ENCODE measurements at regions of chr5 and their contacts with region 1.

Region 1: GRCh38 chr5:132490486-132491367 is at the start of gene IRF1:
- DNase-seq: peak; percentile 94 to 99 (median 97)
- ATAC-seq: peak; percentile 74
- H3K4me3 ChIP-seq: peak within 1 kb of the TSS; percentile 90 to 96
- H3K4me3 Mint-ChIP-seq: peak within 1 kb of the TSS; percentile 96
- H3K27ac ChIP-seq: peak within 1 kb of the TSS; percentile 95 to 98
- H3K27ac Mint-ChIP-seq: peak within 1 kb of the TSS; percentile 97
- H3K4me1 ChIP-seq: peaks cover 75% of the 10 kb centered on the region
- H3K4me1 Mint-ChIP-seq: peaks cover 75% of the 10 kb centered on the region
- H3K27me3 ChIP-seq: no peaks in the 10 kb centered on the region
- H3K27me3 Mint-ChIP-seq: no peaks in the 10 kb centered on the region
- CTCF ChIP-seq: no peak
- total RNA-seq, gene IRF1: 1,214 to 1,250 TPM

Region 2: DNA sequence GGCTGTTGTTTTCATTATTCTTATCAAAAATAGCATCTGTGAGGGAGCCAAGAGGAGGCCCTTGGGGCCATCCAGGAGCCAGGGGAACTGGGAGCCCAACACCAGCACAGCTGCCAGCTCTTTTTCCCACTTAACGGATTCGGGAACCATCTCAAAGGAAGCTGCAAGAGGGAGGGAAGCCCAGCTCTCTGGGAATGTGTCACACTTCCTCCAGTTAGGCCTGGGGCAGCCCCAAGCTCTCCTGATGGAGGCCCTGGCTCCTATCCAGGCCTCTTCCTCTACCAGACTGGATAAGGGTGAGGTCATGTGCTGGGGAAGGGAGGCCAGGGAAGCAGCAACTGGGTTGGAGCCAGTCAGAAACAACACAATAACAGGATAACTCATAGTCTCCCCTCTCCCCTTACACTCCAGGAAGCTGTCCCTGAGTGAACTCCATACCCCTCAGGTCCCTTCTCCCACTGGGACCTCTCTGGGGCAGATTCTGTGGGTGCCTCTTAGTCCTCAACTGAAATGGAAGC is 404.4 kb before region 1 on chr5:
- CTCF ChIA-PET with region 1: no interaction called
- POLR2A ChIA-PET with region 1: no interaction called
- intact Hi-C with region 1: no loop called
- DNase-seq: no peak
- ATAC-seq: no peak
- H3K4me3 ChIP-seq: no peak overlapping the region
- H3K4me3 Mint-ChIP-seq: no peak overlapping the region
- H3K27ac ChIP-seq: no peak overlapping the region
- H3K27ac Mint-ChIP-seq: no peak overlapping the region
- H3K4me1 ChIP-seq: peaks cover 7% of the 10 kb centered on the region
- H3K4me1 Mint-ChIP-seq: peaks cover 15% of the 10 kb centered on the region
- H3K27me3 ChIP-seq: no peaks in the 10 kb centered on the region
- H3K27me3 Mint-ChIP-seq: no peaks in the 10 kb centered on the region
- CTCF ChIP-seq: no peak

Region 3: DNA sequence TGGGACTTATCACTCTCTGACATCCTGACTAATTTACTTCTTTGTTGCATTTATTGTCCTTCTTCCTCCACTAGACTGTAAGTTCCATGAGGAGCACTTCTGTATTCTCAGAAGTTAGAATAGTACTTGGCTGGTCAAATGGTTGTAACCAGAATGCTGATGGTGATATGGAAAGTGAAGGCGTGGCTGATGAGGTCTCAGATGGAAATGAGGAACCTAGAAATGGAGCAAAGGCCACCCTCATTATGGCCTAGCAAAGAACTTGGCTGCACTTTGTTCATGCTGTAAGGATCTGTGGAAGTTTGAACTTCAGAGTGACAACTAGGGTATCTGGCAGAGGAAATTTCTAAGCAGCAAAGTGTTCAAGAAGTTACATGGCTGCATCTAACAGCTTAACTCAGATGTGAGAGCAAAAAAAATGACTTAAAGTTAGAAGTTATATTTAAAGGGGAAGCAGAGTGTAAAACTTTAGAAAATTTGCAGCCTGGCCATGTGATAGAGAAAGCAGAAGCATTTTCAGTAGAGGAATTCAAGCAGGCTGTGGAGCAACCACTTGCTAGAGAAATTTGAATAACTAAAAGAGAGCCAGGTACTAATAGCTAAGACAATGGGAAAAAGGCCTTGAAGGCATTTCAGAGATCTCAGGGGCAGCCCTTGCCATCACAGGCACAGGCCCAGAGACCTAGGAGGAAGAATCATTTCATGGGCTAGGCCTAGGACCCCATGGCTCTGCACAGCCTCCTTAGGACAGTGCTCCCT is 136.2 kb before region 1 on chr5:
- CTCF ChIA-PET with region 1: no interaction called
- POLR2A ChIA-PET with region 1: no interaction called
- intact Hi-C with region 1: no loop called
- DNase-seq: no peak
- ATAC-seq: no peak
- H3K4me3 ChIP-seq: no peak overlapping the region
- H3K4me3 Mint-ChIP-seq: no peak overlapping the region
- H3K27ac ChIP-seq: no peak overlapping the region
- H3K27ac Mint-ChIP-seq: no peak overlapping the region
- H3K4me1 ChIP-seq: no peaks in the 10 kb centered on the region
- H3K4me1 Mint-ChIP-seq: no peaks in the 10 kb centered on the region
- H3K27me3 ChIP-seq: no peaks in the 10 kb centered on the region
- H3K27me3 Mint-ChIP-seq: no peaks in the 10 kb centered on the region
- CTCF ChIP-seq: no peak

Region 4: GRCh38 chr5:132410451-132411381 is 80.0 kb before region 1 on chr5:
- CTCF ChIA-PET with region 1: interaction called, 28 read pairs
- POLR2A ChIA-PET with region 1: interaction called, 105 read pairs
- intact Hi-C with region 1: loop called in 1 of 2 experiments (anchors 1 kb)
- DNase-seq: peak; percentile 61 to 93 (median 80)
- ATAC-seq: peak; percentile 66
- H3K4me3 ChIP-seq: peak overlapping the region; percentile 73 to 94
- H3K4me3 Mint-ChIP-seq: peak overlapping the region; percentile 95
- H3K27ac ChIP-seq: peak overlapping the region; percentile 96 to 98
- H3K27ac Mint-ChIP-seq: peak overlapping the region; percentile 98
- H3K4me1 ChIP-seq: peaks cover 79% of the 10 kb centered on the region
- H3K4me1 Mint-ChIP-seq: peaks cover 80% of the 10 kb centered on the region
- H3K27me3 ChIP-seq: no peaks in the 10 kb centered on the region
- H3K27me3 Mint-ChIP-seq: no peaks in the 10 kb centered on the region
- CTCF ChIP-seq: peak; percentile 44

Region 5: GRCh38 chr5:132426525-132427138 is 64.1 kb before region 1 on chr5:
- CTCF ChIA-PET with region 1: interaction called, 73 read pairs
- POLR2A ChIA-PET with region 1: interaction called, 136 read pairs
- intact Hi-C with region 1: no loop called
- DNase-seq: peak in 8 of 9 experiments; percentile 52 to 85 (median 66)
- ATAC-seq: peak; percentile 13
- H3K4me3 ChIP-seq: peak overlapping the region; percentile 17 to 31
- H3K4me3 Mint-ChIP-seq: peak overlapping the region; percentile 71
- H3K27ac ChIP-seq: peak overlapping the region; percentile 77 to 98
- H3K27ac Mint-ChIP-seq: peak overlapping the region; percentile 97
- H3K4me1 ChIP-seq: peaks cover 99% of the 10 kb centered on the region
- H3K4me1 Mint-ChIP-seq: peaks cover 95% of the 10 kb centered on the region
- H3K27me3 ChIP-seq: no peaks in the 10 kb centered on the region
- H3K27me3 Mint-ChIP-seq: no peaks in the 10 kb centered on the region
- CTCF ChIP-seq: no peak

Region 6: DNA sequence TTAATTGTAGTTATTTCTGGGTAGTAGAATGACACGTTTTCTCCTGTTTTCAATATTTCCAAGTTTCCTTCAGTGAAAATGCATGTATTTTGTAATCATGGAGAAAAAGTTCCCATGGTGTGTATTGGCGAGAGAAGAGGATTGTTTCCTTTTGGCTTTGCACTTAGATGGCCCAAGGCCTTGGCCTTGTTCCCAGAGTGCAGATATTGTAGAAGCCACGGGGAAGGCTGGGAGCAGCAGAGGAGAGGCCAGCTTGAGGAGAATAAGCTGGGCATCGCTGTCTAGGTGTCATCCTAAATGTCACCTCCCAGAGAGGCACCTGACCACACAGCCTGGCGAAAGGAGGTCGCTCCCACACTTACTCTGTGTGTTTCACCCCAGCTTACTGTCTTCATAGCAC is 44.1 kb before region 1 on chr5:
- CTCF ChIA-PET with region 1: interaction called, 10 read pairs
- POLR2A ChIA-PET with region 1: interaction called, 22 read pairs
- intact Hi-C with region 1: no loop called
- DNase-seq: no peak
- ATAC-seq: no peak
- H3K4me3 ChIP-seq: no peak overlapping the region
- H3K4me3 Mint-ChIP-seq: peak overlapping the region; percentile 66
- H3K27ac ChIP-seq: peak overlapping the region in 1 of 2 experiments; percentile 47
- H3K27ac Mint-ChIP-seq: peak overlapping the region; percentile 86
- H3K4me1 ChIP-seq: peaks cover 54% of the 10 kb centered on the region
- H3K4me1 Mint-ChIP-seq: peaks cover 88% of the 10 kb centered on the region
- H3K27me3 ChIP-seq: no peaks in the 10 kb centered on the region
- H3K27me3 Mint-ChIP-seq: no peaks in the 10 kb centered on the region
- CTCF ChIP-seq: no peak

Region 7: GRCh38 chr5:132466433-132467286 is 24.1 kb before region 1 on chr5:
- CTCF ChIA-PET with region 1: interaction called, 65 read pairs
- POLR2A ChIA-PET with region 1: interaction called, 391 read pairs
- intact Hi-C with region 1: no loop called
- DNase-seq: peak; percentile 53 to 92 (median 74)
- ATAC-seq: peak; percentile 63
- H3K4me3 ChIP-seq: peak overlapping the region; percentile 25 to 28
- H3K4me3 Mint-ChIP-seq: peak overlapping the region; percentile 68
- H3K27ac ChIP-seq: peak overlapping the region; percentile 51 to 85
- H3K27ac Mint-ChIP-seq: peak overlapping the region; percentile 95
- H3K4me1 ChIP-seq: peaks cover 88% of the 10 kb centered on the region
- H3K4me1 Mint-ChIP-seq: peaks cover 96% of the 10 kb centered on the region
- H3K27me3 ChIP-seq: no peaks in the 10 kb centered on the region
- H3K27me3 Mint-ChIP-seq: no peaks in the 10 kb centered on the region
- CTCF ChIP-seq: no peak

Region 8: GRCh38 chr5:132479111-132479951 is 11.4 kb before region 1 on chr5:
- CTCF ChIA-PET with region 1: interaction called, 65 read pairs
- POLR2A ChIA-PET with region 1: interaction called, 391 read pairs
- intact Hi-C with region 1: loop called in 1 of 2 experiments (anchors 1 kb)
- DNase-seq: peak in 3 of 9 experiments; percentile 27 to 55 (median 35)
- ATAC-seq: no peak
- H3K4me3 ChIP-seq: no peak overlapping the region
- H3K4me3 Mint-ChIP-seq: peak overlapping the region; percentile 8
- H3K27ac ChIP-seq: peak overlapping the region in 1 of 2 experiments; percentile 93
- H3K27ac Mint-ChIP-seq: peak overlapping the region; percentile 91
- H3K4me1 ChIP-seq: peaks cover 66% of the 10 kb centered on the region
- H3K4me1 Mint-ChIP-seq: peaks cover 72% of the 10 kb centered on the region
- H3K27me3 ChIP-seq: no peaks in the 10 kb centered on the region
- H3K27me3 Mint-ChIP-seq: no peaks in the 10 kb centered on the region
- CTCF ChIP-seq: no peak

Measured in CD8-positive, alpha-beta T cell (primary cell).